ENCODE measurements at regions of chr11 and their contacts with region 1.

Region 1: DNA sequence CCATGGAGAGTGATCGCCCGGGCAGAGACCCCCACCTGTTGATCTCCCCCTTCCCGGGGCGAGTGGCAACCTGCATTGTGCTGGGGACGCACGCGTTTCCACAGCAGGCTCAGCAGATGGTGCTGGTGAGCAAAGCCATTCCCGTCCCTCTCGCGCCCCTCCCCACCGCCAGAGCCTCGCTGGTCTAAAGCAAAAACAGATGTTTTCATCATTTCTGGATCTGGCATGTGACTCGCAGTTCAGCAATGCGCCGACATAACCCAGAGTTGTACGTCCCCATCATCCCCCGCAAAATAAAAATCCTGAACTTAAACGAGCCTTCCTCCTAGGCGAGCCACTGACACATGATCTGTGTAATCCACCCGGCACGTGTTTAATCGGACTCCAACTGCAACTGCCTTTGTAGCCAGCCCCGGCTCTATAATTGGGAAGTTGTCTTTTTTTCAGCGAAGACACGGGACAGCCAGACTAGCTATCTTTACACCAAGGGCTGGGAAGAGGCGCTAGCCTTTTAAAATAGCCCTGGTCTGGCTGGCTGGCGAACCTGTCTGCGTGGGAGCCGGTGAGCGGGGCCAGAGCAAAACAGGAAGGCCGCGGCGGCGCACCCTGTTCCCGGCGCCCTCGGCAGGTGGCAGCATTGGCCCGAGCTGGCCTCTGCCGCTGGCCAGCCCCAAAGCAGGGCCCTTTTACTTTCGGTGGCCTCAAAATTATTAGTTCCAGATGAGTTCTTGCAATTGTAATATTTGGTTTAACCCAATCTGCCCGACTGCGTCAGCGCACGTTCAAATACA is 203.0 kb upstream of the SORL1-AS1 start:
- DNase-seq: peak; percentile 81 to 87 (median 84)
- ATAC-seq: peak; percentile 90
- H3K4me3 ChIP-seq: peak overlapping the region in 1 of 2 donors; percentile 8
- H3K27ac ChIP-seq: peak overlapping the region; percentile 40 to 86 (median 78)
- H3K4me1 ChIP-seq: peaks cover 11% of the 10 kb centered on the region
- H3K27me3 ChIP-seq: no peaks in the 10 kb centered on the region
- CTCF ChIP-seq: peak; percentile 74 to 96 (median 85)
- POLR2A ChIP-seq: peak in 1 of 3 donors; percentile 32

Region 2: DNA sequence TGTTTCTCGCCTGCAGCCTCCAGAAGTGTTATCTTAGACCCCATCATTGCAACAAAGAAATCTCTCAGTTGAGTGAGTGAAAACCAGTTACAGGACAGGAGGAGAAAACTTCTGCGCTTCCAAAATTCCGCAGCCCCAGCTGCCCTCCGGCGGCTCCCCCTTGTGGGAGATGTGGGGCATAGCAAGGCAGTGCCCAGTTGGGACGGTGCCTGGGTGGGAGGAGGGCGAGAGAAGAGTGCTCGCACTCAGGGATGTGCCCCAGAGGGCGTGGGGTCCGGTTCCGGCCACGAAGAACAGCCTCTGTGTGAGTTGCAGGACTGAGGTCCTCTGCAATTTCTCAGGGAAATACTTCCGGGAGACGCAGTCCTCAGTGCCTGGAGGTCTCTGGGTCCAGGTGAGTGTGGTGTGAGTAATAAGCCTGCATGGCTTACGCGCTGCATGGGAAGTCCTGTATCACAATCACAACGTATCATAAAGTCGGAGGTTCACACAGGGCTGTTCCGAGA is 547.3 kb after region 1 on chr11:
- intact Hi-C with region 1: loop called (anchors 5 kb)
- DNase-seq: peak; percentile 50 to 62 (median 56)
- ATAC-seq: peak; percentile 88
- H3K4me3 ChIP-seq: no peak overlapping the region
- H3K27ac ChIP-seq: no peak overlapping the region
- H3K4me1 ChIP-seq: peaks cover 14% of the 10 kb centered on the region
- H3K27me3 ChIP-seq: no peaks in the 10 kb centered on the region
- CTCF ChIP-seq: peak; percentile 82 to 96 (median 89)
- POLR2A ChIP-seq: no peak

Measured in body of pancreas (tissue), 4 donors.